ENCODE measurements at regions of chr19 and their contacts with region 1.

Region 1: GRCh38 chr19:44021221-44021620 is 4.0 kb upstream of the ZNF222 start:
- DNase-seq: no peak
- ATAC-seq: no peak
- H3K4me3 ChIP-seq: no peak overlapping the region
- H3K4me3 Mint-ChIP-seq: no peak overlapping the region
- H3K27ac ChIP-seq: no peak overlapping the region
- H3K27ac Mint-ChIP-seq: no peak overlapping the region
- H3K4me1 ChIP-seq: peaks cover 6 to 7% of the 10 kb centered on the region in 2 experiments
- H3K4me1 Mint-ChIP-seq: peaks cover 16 to 19% (median 16%) of the 10 kb centered on the region in 3 donors
- H3K27me3 ChIP-seq: no peaks in the 10 kb centered on the region
- H3K27me3 Mint-ChIP-seq: peaks cover 18 to 30% of the 10 kb centered on the region in 2 donors

Region 2: GRCh38 chr19:44002566-44003460 is 18.4 kb before region 1 on chr19 and contains the start of gene ZNF230:
- CTCF ChIA-PET with region 1: no interaction called
- POLR2A ChIA-PET with region 1: no interaction called
- DNase-seq: peak; percentile 57 to 94 (median 80)
- ATAC-seq: peak; percentile 97 to 99 (median 99)
- H3K4me3 ChIP-seq: peak within 1 kb of the TSS; percentile 78 to 87
- H3K4me3 Mint-ChIP-seq: peak within 1 kb of the TSS; percentile 99 to 100 (median 99)
- H3K27ac ChIP-seq: peak within 1 kb of the TSS; percentile 52
- H3K27ac Mint-ChIP-seq: peak within 1 kb of the TSS; percentile 95 to 97
- H3K4me1 ChIP-seq: peaks cover 8 to 15% of the 10 kb centered on the region in 2 experiments
- H3K4me1 Mint-ChIP-seq: peaks cover 22 to 26% (median 22%) of the 10 kb centered on the region in 3 donors
- H3K27me3 ChIP-seq: no peaks in the 10 kb centered on the region
- H3K27me3 Mint-ChIP-seq: no peaks in the 10 kb centered on the region
- total RNA-seq, gene ZNF230: 2.7 to 9.5 (median 8.1) TPM

Region 3: GRCh38 chr19:44051654-44052402 is 30.6 kb after region 1 on chr19 and contains the start of gene ZNF223:
- CTCF ChIA-PET with region 1: interaction called in 1 of 2 experiments, 12 read pairs
- POLR2A ChIA-PET with region 1: no interaction called
- DNase-seq: peak in 29 of 35 experiments; percentile 8 to 79 (median 32)
- ATAC-seq: peak; percentile 91 to 97 (median 94)
- H3K4me3 ChIP-seq: peak within 1 kb of the TSS; percentile 62 to 94
- H3K4me3 Mint-ChIP-seq: peak within 1 kb of the TSS; percentile 89 to 94 (median 94)
- H3K27ac ChIP-seq: no peak within 1 kb of the TSS
- H3K27ac Mint-ChIP-seq: peak within 1 kb of the TSS; percentile 85 to 88
- H3K4me1 ChIP-seq: peaks cover 3 to 12% of the 10 kb centered on the region in 2 experiments
- H3K4me1 Mint-ChIP-seq: peaks cover 28 to 32% (median 31%) of the 10 kb centered on the region in 3 donors
- H3K27me3 ChIP-seq: peaks cover 2 to 7% of the 10 kb centered on the region in 2 experiments
- H3K27me3 Mint-ChIP-seq: peaks cover 0 to 12% of the 10 kb centered on the region in 2 donors
- total RNA-seq, gene ZNF223: 2.5 to 6.8 (median 5.9) TPM

Region 4: DNA sequence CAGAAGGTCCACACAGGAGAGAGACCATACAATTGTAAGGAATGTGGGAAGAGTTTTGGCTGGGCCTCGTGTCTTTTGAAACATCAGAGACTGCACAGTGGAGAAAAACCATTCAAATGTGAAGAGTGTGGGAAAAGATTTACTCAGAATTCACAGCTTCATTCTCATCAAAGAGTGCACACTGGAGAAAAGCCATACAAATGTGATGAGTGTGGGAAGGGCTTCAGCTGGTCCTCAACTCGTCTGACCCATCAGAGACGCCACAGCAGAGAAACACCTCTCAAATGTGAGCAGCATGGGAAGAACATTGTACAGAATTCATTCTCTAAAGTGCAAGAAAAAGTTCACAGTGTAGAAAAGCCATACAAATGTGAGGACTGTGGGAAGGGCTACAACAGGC is 86.5 kb after region 1 on chr19:
- CTCF ChIA-PET with region 1: no interaction called
- POLR2A ChIA-PET with region 1: no interaction called
- DNase-seq: no peak
- ATAC-seq: no peak
- H3K4me3 ChIP-seq: no peak overlapping the region
- H3K4me3 Mint-ChIP-seq: no peak overlapping the region
- H3K27ac ChIP-seq: no peak overlapping the region
- H3K27ac Mint-ChIP-seq: no peak overlapping the region
- H3K4me1 ChIP-seq: peaks cover 6 to 8% of the 10 kb centered on the region in 2 experiments
- H3K4me1 Mint-ChIP-seq: peaks cover 8 to 12% (median 10%) of the 10 kb centered on the region in 3 donors
- H3K27me3 ChIP-seq: no peaks in the 10 kb centered on the region
- H3K27me3 Mint-ChIP-seq: no peaks in the 10 kb centered on the region

Region 5: DNA sequence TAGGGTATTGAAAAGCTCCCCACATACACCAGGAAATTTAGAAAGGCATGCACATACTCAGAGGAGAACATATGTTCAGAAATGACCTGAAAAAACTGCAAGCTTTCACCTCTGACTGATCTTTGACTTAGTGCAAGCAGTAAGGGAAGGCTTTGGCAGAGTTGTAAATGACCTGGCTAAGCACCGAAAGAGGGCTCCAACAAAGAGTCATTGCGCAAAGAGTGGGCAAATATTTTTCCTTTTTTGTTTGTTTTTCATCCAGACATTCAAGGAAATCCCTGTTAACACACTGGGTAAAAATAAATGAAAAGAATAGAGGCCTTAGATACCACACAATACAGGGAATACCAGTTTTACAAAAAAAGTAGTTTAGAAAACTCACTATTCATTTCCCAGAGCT is 233.3 kb after region 1 on chr19:
- CTCF ChIA-PET with region 1: no interaction called
- POLR2A ChIA-PET with region 1: no interaction called
- DNase-seq: no peak
- ATAC-seq: no peak
- H3K4me3 ChIP-seq: no peak overlapping the region
- H3K4me3 Mint-ChIP-seq: no peak overlapping the region
- H3K27ac ChIP-seq: no peak overlapping the region
- H3K27ac Mint-ChIP-seq: no peak overlapping the region
- H3K4me1 ChIP-seq: peaks cover 0 to 2% of the 10 kb centered on the region in 2 experiments
- H3K4me1 Mint-ChIP-seq: peaks cover 0 to 1% (median 0%) of the 10 kb centered on the region in 3 donors
- H3K27me3 ChIP-seq: no peaks in the 10 kb centered on the region
- H3K27me3 Mint-ChIP-seq: no peaks in the 10 kb centered on the region

Measured in T-cell (primary cell).